ENCODE measurements at regions of chr12 and their contacts with region 1.

Region 1: GRCh38 chr12:21657326-21658077 is at the start of gene LDHB:
- DNase-seq: peak; percentile 80 to 96 (median 93)
- ATAC-seq: peak; percentile 96
- H3K4me3 ChIP-seq: peak within 1 kb of the TSS; percentile 72 to 95
- H3K4me3 Mint-ChIP-seq: peak within 1 kb of the TSS; percentile 99
- H3K27ac ChIP-seq: peak within 1 kb of the TSS; percentile 70 to 77
- H3K27ac Mint-ChIP-seq: peak within 1 kb of the TSS; percentile 99
- H3K4me1 ChIP-seq: peaks cover 38% of the 10 kb centered on the region
- H3K4me1 Mint-ChIP-seq: peaks cover 60% of the 10 kb centered on the region
- H3K27me3 ChIP-seq: no peaks in the 10 kb centered on the region
- H3K27me3 Mint-ChIP-seq: no peaks in the 10 kb centered on the region
- CTCF ChIP-seq: no peak
- total RNA-seq, gene LDHB: 492 to 577 TPM

Region 2: GRCh38 chr12:21438643-21439042 is 218.9 kb before region 1 on chr12:
- CTCF ChIA-PET with region 1: no interaction called
- POLR2A ChIA-PET with region 1: no interaction called
- intact Hi-C with region 1: loop called (anchors 1 to 5 kb)
- DNase-seq: peak in 1 of 9 experiments; percentile 27
- ATAC-seq: no peak
- H3K4me3 ChIP-seq: peak overlapping the region; percentile 91 to 95
- H3K4me3 Mint-ChIP-seq: peak overlapping the region; percentile 98
- H3K27ac ChIP-seq: peak overlapping the region; percentile 86 to 89
- H3K27ac Mint-ChIP-seq: peak overlapping the region; percentile 97
- H3K4me1 ChIP-seq: peaks cover 37% of the 10 kb centered on the region
- H3K4me1 Mint-ChIP-seq: peaks cover 46% of the 10 kb centered on the region
- H3K27me3 ChIP-seq: no peaks in the 10 kb centered on the region
- H3K27me3 Mint-ChIP-seq: no peaks in the 10 kb centered on the region
- CTCF ChIP-seq: no peak

Region 3: DNA sequence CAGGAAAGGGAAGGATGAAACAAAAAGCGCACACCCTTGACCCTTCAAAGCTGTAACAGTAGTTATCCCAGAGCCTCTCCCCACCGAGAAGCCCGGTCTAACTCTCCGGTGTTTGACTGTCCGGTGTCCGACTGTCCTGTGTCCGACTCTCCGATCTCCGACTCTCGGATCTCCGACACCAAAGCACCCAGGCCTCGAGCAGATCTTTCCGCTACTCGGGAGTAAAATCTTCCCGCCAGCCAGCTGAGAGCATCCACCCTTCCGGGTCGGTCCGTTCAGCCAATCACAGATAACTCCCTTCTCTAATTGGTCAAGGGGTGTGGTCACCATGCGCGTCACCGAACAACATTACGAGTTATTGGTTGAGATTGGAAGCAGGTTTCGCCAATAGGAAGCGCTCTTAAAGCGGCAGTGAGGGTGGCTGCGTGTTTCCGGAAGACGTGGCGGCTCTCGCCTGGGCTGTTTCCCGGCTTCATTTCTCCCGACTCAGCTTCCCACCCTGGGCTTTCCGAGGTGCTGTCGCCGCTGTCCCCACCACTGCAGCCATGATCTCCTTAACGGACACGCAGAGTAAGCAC is 156.0 kb before region 1 on chr12 and contains the starts of genes GOLT1B and RECQL:
- CTCF ChIA-PET with region 1: no interaction called
- POLR2A ChIA-PET with region 1: interaction called, 7 read pairs
- intact Hi-C with region 1: loop called (anchors 1 to 5 kb)
- DNase-seq: peak; percentile 74 to 98 (median 88)
- ATAC-seq: peak; percentile 94
- H3K4me3 ChIP-seq: peak within 1 kb of the TSS; percentile 89 to 95
- H3K4me3 Mint-ChIP-seq: no peak within 1 kb of the TSS
- H3K27ac ChIP-seq: peak within 1 kb of the TSS; percentile 83 to 84
- H3K27ac Mint-ChIP-seq: no peak within 1 kb of the TSS
- H3K4me1 ChIP-seq: peaks cover 35% of the 10 kb centered on the region
- H3K4me1 Mint-ChIP-seq: peaks cover 60% of the 10 kb centered on the region
- H3K27me3 ChIP-seq: no peaks in the 10 kb centered on the region
- H3K27me3 Mint-ChIP-seq: no peaks in the 10 kb centered on the region
- CTCF ChIP-seq: no peak
- total RNA-seq, gene GOLT1B: 45.2 to 52.9 TPM
- total RNA-seq, gene RECQL: 9.9 to 14.6 TPM

Region 4: DNA sequence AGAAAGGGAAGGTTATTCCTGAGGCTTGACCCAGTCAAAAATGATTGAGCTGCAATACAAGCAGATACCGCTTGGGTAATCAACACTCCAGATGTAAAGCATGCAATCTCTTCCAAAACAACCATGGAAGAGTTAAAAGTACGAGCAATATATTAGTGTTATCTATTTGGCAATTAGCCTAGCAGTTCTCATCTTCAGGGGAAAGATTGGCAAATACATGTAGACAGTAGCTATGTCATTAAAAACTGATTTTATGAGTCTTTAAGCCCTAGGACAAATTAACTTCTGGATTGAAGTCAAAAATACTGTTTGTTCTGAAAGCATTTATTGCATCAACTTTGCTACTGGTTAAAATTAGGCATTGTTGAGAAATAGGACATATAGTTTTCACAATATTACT is 43.6 kb before region 1 on chr12:
- CTCF ChIA-PET with region 1: interaction called, 4 read pairs
- POLR2A ChIA-PET with region 1: interaction called, 8 read pairs
- intact Hi-C with region 1: loop called in 1 of 2 experiments (anchors 2 kb)
- DNase-seq: no peak
- ATAC-seq: no peak
- H3K4me3 ChIP-seq: peak overlapping the region in 1 of 2 experiments; percentile 19
- H3K4me3 Mint-ChIP-seq: peak overlapping the region; percentile 29
- H3K27ac ChIP-seq: peak overlapping the region; percentile 32 to 68
- H3K27ac Mint-ChIP-seq: peak overlapping the region; percentile 92
- H3K4me1 ChIP-seq: peaks cover 54% of the 10 kb centered on the region
- H3K4me1 Mint-ChIP-seq: peaks cover 58% of the 10 kb centered on the region
- H3K27me3 ChIP-seq: no peaks in the 10 kb centered on the region
- H3K27me3 Mint-ChIP-seq: no peaks in the 10 kb centered on the region
- CTCF ChIP-seq: no peak

Region 5: GRCh38 chr12:21677622-21678277 is 20.2 kb after region 1 on chr12:
- CTCF ChIA-PET with region 1: interaction called, 35 read pairs
- POLR2A ChIA-PET with region 1: interaction called, 75 read pairs
- intact Hi-C with region 1: loop called (anchors 1 to 2 kb)
- DNase-seq: peak in 5 of 9 experiments; percentile 10 to 65 (median 28)
- ATAC-seq: peak; percentile 39
- H3K4me3 ChIP-seq: peak overlapping the region; percentile 13 to 47
- H3K4me3 Mint-ChIP-seq: peak overlapping the region; percentile 76
- H3K27ac ChIP-seq: peak overlapping the region; percentile 17 to 32
- H3K27ac Mint-ChIP-seq: peak overlapping the region; percentile 91
- H3K4me1 ChIP-seq: peaks cover 54% of the 10 kb centered on the region
- H3K4me1 Mint-ChIP-seq: peaks cover 52% of the 10 kb centered on the region
- H3K27me3 ChIP-seq: no peaks in the 10 kb centered on the region
- H3K27me3 Mint-ChIP-seq: no peaks in the 10 kb centered on the region
- CTCF ChIP-seq: no peak

Region 6: DNA sequence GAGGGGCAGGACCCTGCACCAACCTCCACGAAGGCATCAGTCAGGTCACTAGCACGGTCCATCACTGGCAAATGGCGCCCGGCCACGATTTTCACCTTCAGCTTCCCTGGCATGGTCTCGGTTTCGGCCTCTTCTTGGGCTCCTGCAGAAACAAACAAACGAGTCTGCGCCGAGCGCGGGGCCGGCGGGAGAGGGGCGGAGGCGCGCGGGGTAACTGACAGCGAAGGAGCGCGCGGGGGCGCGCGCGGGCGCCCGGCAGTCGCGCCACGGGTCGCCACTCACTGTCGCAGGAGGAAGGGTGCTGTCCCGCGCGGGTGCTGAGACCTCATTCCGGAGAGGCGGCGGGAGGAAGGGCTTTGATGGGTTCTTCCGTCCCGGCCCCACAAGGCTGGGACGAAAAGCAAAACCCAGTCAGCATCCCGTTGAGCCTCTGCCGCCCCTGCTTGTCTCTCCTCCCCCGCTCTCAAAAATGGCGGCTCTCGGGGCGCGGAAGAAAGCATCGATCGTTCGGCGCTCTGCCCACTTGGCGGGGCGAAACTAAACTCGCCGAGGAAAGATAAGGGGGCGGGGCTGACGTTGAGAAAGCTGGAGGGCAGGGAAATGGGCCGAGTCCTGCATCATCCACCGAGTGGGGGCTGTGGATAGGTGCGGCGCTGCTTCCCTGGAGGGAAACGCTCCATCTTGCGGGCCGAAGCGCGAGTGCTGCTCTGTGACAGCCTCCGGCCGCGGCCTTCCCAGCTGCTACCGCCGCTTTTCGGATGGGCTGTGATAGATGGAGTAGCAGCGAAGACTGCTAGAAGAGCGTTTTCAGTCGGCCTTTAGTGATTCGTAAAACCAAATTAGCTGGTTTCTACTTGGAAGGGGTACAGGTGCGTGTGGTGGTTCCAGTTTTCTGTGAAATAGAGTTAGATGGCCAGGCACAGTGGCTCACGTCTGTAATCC is 886.8 kb after region 1 on chr12 and contains the start of gene C2CD5:
- CTCF ChIA-PET with region 1: no interaction called
- POLR2A ChIA-PET with region 1: interaction called, 6 read pairs
- intact Hi-C with region 1: loop called (anchors 5 kb)
- DNase-seq: peak; percentile 92 to 99 (median 95)
- ATAC-seq: peak; percentile 91
- H3K4me3 ChIP-seq: peak within 1 kb of the TSS; percentile 79 to 99
- H3K4me3 Mint-ChIP-seq: peak within 1 kb of the TSS; percentile 94
- H3K27ac ChIP-seq: peak within 1 kb of the TSS; percentile 92
- H3K27ac Mint-ChIP-seq: peak within 1 kb of the TSS; percentile 94
- H3K4me1 ChIP-seq: peaks cover 25% of the 10 kb centered on the region
- H3K4me1 Mint-ChIP-seq: peaks cover 38% of the 10 kb centered on the region
- H3K27me3 ChIP-seq: no peaks in the 10 kb centered on the region
- H3K27me3 Mint-ChIP-seq: no peaks in the 10 kb centered on the region
- CTCF ChIP-seq: peak; percentile 16
- total RNA-seq, gene C2CD5: 19.5 to 24.4 TPM

Measured in CD8-positive, alpha-beta T cell (primary cell).